T-cell (primary cell): ENCODE measurements at regions of chr7 and their contacts with region 1.

Region 1: DNA sequence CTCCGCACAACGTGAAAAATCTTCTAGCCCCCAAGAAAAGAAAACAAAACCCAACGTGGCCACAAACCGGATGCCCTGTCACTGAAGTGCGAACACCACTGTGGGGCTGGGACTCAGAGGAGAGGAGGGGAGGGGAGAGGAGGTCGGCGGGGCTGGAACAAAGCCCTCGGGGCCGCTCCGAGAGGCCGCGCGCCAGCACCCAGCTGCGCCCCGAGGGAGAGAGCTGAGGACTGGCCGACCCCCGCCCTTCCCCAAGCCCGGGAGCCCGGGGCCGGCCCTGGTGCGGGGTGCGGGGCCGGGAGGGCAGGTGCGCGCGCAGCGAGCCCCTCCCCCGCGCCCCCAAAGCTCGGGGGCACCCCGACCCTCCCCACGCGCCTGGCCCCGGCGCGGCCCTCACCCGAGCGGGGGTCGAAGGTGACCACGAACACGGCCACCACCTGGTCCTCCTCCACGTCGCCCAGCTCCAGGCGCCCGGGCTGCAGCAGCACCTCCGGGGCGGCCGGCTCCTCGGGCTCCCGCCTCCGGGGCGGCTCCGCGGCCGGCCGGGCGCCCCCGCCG is 398 bp downstream of the DENND11 start:
- DNase-seq: peak; percentile 45 to 86 (median 77)
- ATAC-seq: peak; percentile 87 to 90 (median 88)
- H3K4me3 ChIP-seq: peak overlapping the region; percentile 51 to 58
- H3K4me3 Mint-ChIP-seq: peak overlapping the region; percentile 84 to 94 (median 88)
- H3K27ac ChIP-seq: peak overlapping the region; percentile 28
- H3K27ac Mint-ChIP-seq: peak overlapping the region; percentile 56 to 86
- H3K4me1 ChIP-seq: peaks cover 4 to 20% of the 10 kb centered on the region in 2 experiments
- H3K4me1 Mint-ChIP-seq: peaks cover 47 to 56% (median 50%) of the 10 kb centered on the region in 3 donors
- H3K27me3 ChIP-seq: no peaks in the 10 kb centered on the region
- H3K27me3 Mint-ChIP-seq: no peaks in the 10 kb centered on the region

Region 2: DNA sequence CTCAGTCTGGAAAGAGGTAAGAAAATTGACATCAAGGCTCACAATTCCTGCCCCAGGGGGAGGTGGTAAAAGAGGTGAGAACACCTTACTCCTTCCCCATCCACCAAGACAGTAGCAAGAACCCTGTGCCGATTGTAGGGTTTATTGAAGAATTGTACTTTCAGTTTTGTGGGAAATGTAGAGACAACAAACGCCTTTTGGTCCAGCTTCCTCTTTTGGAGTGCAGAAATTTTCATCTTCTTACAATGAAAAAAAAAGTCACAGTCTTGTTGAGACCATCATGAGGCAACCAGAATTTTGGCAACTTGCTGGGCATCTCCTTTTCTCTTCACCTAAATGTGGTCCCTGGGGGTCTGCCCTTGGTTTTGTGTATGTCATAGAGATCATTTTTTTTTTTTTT is 410.0 kb before region 1 on chr7:
- CTCF ChIA-PET with region 1: no interaction called
- POLR2A ChIA-PET with region 1: no interaction called
- DNase-seq: no peak
- ATAC-seq: no peak
- H3K4me3 ChIP-seq: no peak overlapping the region
- H3K4me3 Mint-ChIP-seq: no peak overlapping the region
- H3K27ac ChIP-seq: no peak overlapping the region
- H3K27ac Mint-ChIP-seq: no peak overlapping the region
- H3K4me1 ChIP-seq: no peaks in the 10 kb centered on the region
- H3K4me1 Mint-ChIP-seq: peaks cover 0 to 3% (median 3%) of the 10 kb centered on the region in 3 donors
- H3K27me3 ChIP-seq: no peaks in the 10 kb centered on the region
- H3K27me3 Mint-ChIP-seq: peaks cover 11 to 20% of the 10 kb centered on the region in 2 donors

Region 3: DNA sequence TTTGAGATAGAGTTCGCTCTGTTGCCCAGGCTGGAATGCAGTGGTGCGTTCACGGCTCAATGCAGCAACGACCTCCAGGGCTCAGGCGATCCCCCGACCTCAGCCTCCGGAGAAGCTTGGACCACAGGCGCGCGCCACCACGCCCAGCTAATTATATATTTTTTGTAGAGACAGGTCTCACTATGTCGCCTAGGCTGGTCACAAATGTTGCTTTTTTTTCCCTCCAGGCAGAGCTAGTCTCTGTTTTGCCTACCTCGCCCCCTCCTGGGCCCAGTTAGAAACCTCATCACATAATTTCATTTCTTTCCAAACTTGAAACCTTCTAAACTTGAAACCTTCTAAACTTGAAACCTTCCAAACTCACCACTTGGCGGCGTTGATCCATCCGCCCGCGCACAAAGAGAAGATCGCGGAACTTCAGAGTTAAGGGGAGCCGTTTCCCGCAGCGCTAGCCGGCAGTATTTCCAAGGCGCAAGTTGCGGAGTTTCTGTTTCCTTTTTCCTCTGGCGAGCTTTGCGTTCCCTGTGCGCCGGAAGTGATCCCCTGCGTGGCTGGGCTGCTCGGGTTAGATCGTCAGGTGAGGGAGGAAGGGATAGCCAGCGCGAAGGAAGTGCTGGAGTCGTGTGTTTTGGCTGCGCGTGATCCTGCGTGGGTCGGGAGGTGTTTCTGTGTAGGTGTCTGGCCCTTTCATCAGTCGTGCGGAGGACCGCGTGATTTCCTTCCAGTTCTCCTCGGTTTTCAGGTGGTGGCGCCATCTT is 36.4 kb after region 1 on chr7 and contains the start of gene SSBP1:
- CTCF ChIA-PET with region 1: interaction called, 8 to 11 read pairs
- POLR2A ChIA-PET with region 1: interaction called, 4 to 5 read pairs
- DNase-seq: peak; percentile 82 to 97 (median 89)
- ATAC-seq: peak; percentile 85 to 93 (median 90)
- H3K4me3 ChIP-seq: peak within 1 kb of the TSS; percentile 65 to 96
- H3K4me3 Mint-ChIP-seq: peak within 1 kb of the TSS; percentile 96 to 98 (median 97)
- H3K27ac ChIP-seq: peak within 1 kb of the TSS; percentile 87
- H3K27ac Mint-ChIP-seq: peak within 1 kb of the TSS; percentile 95 to 97
- H3K4me1 ChIP-seq: peaks cover 14 to 18% of the 10 kb centered on the region in 2 experiments
- H3K4me1 Mint-ChIP-seq: peaks cover 52 to 54% (median 53%) of the 10 kb centered on the region in 3 donors
- H3K27me3 ChIP-seq: no peaks in the 10 kb centered on the region
- H3K27me3 Mint-ChIP-seq: no peaks in the 10 kb centered on the region
- total RNA-seq, gene SSBP1: 88.1 to 116 (median 91.1) TPM